ENCODE measurements at regions of chr4 and their contacts with region 1.

Region 1: DNA sequence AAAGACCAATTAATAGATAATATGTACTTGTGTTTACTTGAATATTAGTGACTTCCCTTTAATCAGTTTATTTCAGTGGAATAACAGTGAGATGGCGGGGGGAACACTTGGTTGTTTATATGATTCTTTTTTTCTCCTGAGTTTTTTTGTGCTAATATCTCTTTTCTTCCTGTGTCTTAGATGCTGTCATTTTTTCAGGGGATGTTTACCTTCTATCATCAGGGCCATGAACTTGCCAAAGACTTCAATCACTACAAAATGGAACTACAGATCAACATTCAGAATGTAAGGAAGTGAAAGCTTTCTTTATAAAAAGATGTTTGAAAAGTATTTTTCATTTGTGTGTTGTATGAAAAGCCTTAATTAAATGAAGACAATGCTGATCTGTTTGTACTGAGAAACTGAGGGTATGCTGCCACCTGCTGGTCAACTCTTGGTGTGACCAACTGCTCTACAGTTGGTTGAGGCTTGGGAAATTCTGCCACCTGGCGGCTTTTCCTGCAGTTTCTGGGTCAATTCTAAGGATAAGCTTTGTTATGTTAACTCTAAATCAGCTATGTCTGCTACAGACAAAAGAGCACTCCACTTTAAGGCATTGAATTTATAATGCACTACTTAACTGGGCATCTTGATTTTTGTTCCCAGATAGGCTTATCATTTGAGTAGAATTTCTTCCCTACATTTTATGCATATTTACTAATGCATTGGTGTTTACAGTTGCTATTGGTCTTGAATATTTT is 134.8 kb downstream of the ARHGAP10 start:
- DNase-seq: peak; percentile 72
- H3K4me3 ChIP-seq: peak overlapping the region in 1 of 2 experiments; percentile 48; a peak in 1 of 4 replicates
- H3K27ac ChIP-seq: peak overlapping the region in 1 of 2 experiments; percentile 58; a peak in 1 of 4 replicates
- H3K4me1 ChIP-seq: peaks cover 12 to 30% of the 10 kb centered on the region in 2 experiments; a peak in 2 of 4 replicates
- H3K27me3 ChIP-seq: no peaks in the 10 kb centered on the region
- CTCF ChIP-seq: peak; percentile 100
- EP300 ChIP-seq: no peak
- RAD21 ChIP-seq: peak; percentile 100

Region 2: GRCh38 chr4:147463065-147463464 is 403.6 kb before region 1 on chr4:
- CTCF ChIA-PET with region 1: no interaction called
- POLR2A ChIA-PET with region 1: no interaction called
- DNase-seq: no peak
- H3K4me3 ChIP-seq: no peak overlapping the region
- H3K27ac ChIP-seq: no peak overlapping the region
- H3K4me1 ChIP-seq: no peaks in the 10 kb centered on the region
- H3K27me3 ChIP-seq: no peaks in the 10 kb centered on the region
- CTCF ChIP-seq: no peak
- EP300 ChIP-seq: no peak
- RAD21 ChIP-seq: no peak

Region 3: DNA sequence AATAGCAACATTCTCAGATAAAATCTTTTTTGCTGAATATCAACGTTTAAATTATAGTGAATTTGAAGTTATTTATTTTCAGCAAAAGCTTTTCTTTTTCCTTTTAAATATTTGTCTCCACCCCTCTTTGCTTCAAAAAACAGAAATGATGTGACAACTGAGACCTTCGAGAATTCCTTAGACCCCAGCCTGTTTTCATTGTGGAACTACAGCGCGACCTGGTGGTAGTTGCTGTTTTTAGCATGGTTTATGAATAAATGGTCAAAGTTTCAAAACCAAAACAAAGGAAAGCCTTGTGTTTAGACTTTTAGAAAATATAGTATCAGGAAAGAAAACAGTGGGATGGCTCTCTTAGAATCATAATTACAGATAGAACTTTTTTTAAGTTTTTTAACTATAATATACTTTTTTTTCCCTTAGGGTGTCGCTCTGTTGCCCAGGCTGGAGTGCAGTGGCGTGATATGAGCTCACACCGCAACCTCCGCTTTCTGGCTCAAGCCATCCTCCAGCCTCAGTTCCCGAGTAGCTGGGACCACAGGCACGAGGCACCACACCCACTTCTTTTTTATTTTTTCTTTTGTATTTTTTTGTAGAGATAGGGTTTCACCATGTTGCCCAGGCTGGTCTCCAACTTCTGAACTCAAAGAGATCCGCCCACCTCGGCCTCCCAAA is 276.3 kb before region 1 on chr4:
- CTCF ChIA-PET with region 1: interaction called, 42 read pairs
- POLR2A ChIA-PET with region 1: interaction called, 3 read pairs
- DNase-seq: peak; percentile 67
- H3K4me3 ChIP-seq: no peak overlapping the region
- H3K27ac ChIP-seq: no peak overlapping the region
- H3K4me1 ChIP-seq: peaks cover 7 to 12% of the 10 kb centered on the region in 2 experiments; a peak in 3 of 4 replicates
- H3K27me3 ChIP-seq: no peaks in the 10 kb centered on the region
- CTCF ChIP-seq: peak; percentile 92
- EP300 ChIP-seq: no peak
- RAD21 ChIP-seq: peak; percentile 96

Region 4: GRCh38 chr4:147651563-147651962 is 215.1 kb before region 1 on chr4:
- CTCF ChIA-PET with region 1: interaction called, 17 read pairs
- POLR2A ChIA-PET with region 1: no interaction called
- DNase-seq: no peak
- H3K4me3 ChIP-seq: no peak overlapping the region
- H3K27ac ChIP-seq: no peak overlapping the region
- H3K4me1 ChIP-seq: no peaks in the 10 kb centered on the region
- H3K27me3 ChIP-seq: no peaks in the 10 kb centered on the region
- CTCF ChIP-seq: no peak
- EP300 ChIP-seq: no peak
- RAD21 ChIP-seq: no peak

Region 5: DNA sequence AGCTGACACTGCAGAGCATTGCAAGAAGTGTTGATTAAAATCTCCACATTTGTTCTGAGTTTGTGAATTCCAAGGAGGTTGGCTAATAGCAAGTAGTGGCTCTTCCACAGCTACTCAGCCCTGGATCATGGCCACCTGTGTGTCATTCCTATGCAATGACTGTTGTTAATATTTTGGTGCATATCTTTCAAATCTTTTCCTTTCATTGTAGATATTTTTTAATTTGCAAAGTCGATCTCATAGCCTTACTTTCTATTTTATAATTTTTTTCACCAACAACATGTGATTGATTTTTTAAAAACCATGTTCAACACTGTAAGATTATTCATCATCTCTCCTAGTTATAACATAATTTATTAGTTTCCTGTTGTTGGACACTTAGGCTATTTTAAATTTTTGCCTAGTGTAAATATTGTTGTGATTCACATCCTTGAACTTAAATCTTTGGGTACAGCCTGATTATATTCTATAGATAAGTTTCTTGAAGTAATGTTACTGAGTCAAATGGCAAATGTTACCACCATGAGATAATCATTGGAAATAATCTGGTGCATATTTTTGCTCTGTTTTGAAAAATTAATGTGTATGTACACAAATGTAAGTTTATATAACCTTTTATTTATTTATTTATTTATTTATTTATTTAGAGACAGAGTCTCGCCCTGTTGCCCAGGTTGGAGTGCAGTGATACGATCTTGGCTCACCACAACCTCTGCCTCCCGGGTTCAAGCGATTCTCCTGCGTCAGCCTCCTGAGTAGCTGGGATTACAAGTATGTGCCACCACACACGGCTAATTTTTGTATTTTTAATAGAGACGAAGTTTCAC is 151.9 kb before region 1 on chr4:
- CTCF ChIA-PET with region 1: interaction called, 182 read pairs
- POLR2A ChIA-PET with region 1: no interaction called
- DNase-seq: no peak
- H3K4me3 ChIP-seq: peak overlapping the region in 1 of 2 experiments; percentile 28; a peak in 1 of 4 replicates
- H3K27ac ChIP-seq: peak overlapping the region in 1 of 2 experiments; percentile 72; a peak in 3 of 4 replicates
- H3K4me1 ChIP-seq: 0 out of 4 replicates have a peak, but pooled peaks cover 0 to 3% of the 10 kb centered on the region in 2 experiments
- H3K27me3 ChIP-seq: no peaks in the 10 kb centered on the region
- CTCF ChIP-seq: no peak
- EP300 ChIP-seq: peak in 1 of 2 experiments; percentile 87; a peak in 2 of 4 replicates
- RAD21 ChIP-seq: no peak

Region 6: GRCh38 chr4:147780137-147780777 is 86.4 kb before region 1 on chr4:
- CTCF ChIA-PET with region 1: interaction called, 13 read pairs
- POLR2A ChIA-PET with region 1: no interaction called
- DNase-seq: no peak
- H3K4me3 ChIP-seq: no peak overlapping the region
- H3K27ac ChIP-seq: no peak overlapping the region; a peak in 1 of 4 replicates
- H3K4me1 ChIP-seq: peaks cover 19 to 25% of the 10 kb centered on the region in 2 experiments
- H3K27me3 ChIP-seq: no peaks in the 10 kb centered on the region
- CTCF ChIP-seq: no peak
- EP300 ChIP-seq: no peak
- RAD21 ChIP-seq: no peak

Region 7: GRCh38 chr4:147853706-147854105 is 13.0 kb before region 1 on chr4:
- CTCF ChIA-PET with region 1: interaction called, 19 read pairs
- POLR2A ChIA-PET with region 1: no interaction called
- DNase-seq: peak; percentile 34
- H3K4me3 ChIP-seq: no peak overlapping the region; a peak in 1 of 4 replicates
- H3K27ac ChIP-seq: peak overlapping the region; percentile 69 to 94
- H3K4me1 ChIP-seq: peaks cover 0 to 28% of the 10 kb centered on the region in 2 experiments; a peak in 2 of 4 replicates
- H3K27me3 ChIP-seq: no peaks in the 10 kb centered on the region
- CTCF ChIP-seq: no peak
- EP300 ChIP-seq: no peak
- RAD21 ChIP-seq: no peak